ENCODE measurements at regions of chr5 and their contacts with region 1.

Region 1: GRCh38 chr5:102754767-102755431 is at the start of gene PAM:
- DNase-seq: peak; percentile 36
- ATAC-seq: peak; percentile 95
- H3K4me3 ChIP-seq: peak within 1 kb of the TSS; percentile 85 to 88 (median 87)
- H3K27ac ChIP-seq: peak within 1 kb of the TSS; percentile 40
- H3K4me1 ChIP-seq: peaks cover 26% of the 10 kb centered on the region
- H3K27me3 ChIP-seq: peaks cover 1 to 16% of the 10 kb centered on the region in 2 experiments; a peak in 4 of 5 replicates
- CTCF ChIP-seq: no peak
- EP300 ChIP-seq: no peak
- POLR2A ChIP-seq: peak; percentile 30 to 54; a peak in 2 of 4 replicates
- RAD21 ChIP-seq: 0 out of 2 replicates have a peak, but pooled peaks have one; percentile 23
- total RNA-seq, gene PAM: 14.5 and 20.2 TPM in 2 replicates

Region 2: DNA sequence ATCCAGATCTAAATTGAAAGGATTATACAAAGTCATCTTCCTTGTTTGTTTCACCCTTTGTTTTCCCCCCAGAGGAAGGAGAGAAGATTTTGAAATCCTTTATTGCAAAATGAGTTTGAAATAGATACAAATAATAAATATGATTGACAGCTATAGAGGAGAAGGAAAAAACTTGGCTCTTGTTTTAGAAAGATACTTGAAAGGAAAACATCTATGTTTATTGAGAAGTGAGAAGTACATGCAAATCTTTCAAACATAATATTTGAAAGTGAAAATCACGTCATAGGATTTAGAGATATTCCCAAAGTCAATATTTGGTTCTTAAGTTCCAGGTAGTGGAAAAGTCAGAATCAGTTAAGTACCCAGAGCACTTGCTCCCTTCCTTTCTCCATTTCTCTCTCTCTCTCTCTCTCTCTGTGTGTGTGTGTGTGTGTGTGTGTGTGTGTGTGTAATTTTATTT is 27.4 kb after region 1 on chr5:
- CTCF ChIA-PET with region 1: no interaction called
- POLR2A ChIA-PET with region 1: no interaction called
- in situ Hi-C with region 1: no loop called
- intact Hi-C with region 1: no loop called
- DNase-seq: no peak
- ATAC-seq: no peak
- H3K4me3 ChIP-seq: no peak overlapping the region
- H3K27ac ChIP-seq: no peak overlapping the region
- H3K4me1 ChIP-seq: no peaks in the 10 kb centered on the region
- H3K27me3 ChIP-seq: no peaks in the 10 kb centered on the region
- CTCF ChIP-seq: no peak
- EP300 ChIP-seq: no peak
- POLR2A ChIP-seq: no peak
- RAD21 ChIP-seq: no peak

Region 3: GRCh38 chr5:103119765-103120606 is 365.1 kb after region 1 on chr5 and contains the starts of genes GIN1 and PPIP5K2:
- CTCF ChIA-PET with region 1: no interaction called
- POLR2A ChIA-PET with region 1: interaction called, 15 read pairs
- in situ Hi-C with region 1: no loop called
- intact Hi-C with region 1: loop called (anchors 10 kb)
- DNase-seq: peak; percentile 97
- ATAC-seq: peak; percentile 97
- H3K4me3 ChIP-seq: peak within 1 kb of the TSS; percentile 91 to 97 (median 94)
- H3K27ac ChIP-seq: peak within 1 kb of the TSS; percentile 98
- H3K4me1 ChIP-seq: peaks cover 33% of the 10 kb centered on the region
- H3K27me3 ChIP-seq: no peaks in the 10 kb centered on the region; a peak in 1 of 5 replicates
- CTCF ChIP-seq: no peak
- EP300 ChIP-seq: peak in 1 of 2 experiments; percentile 66; a peak in 3 of 4 replicates
- POLR2A ChIP-seq: peak; percentile 86 to 93
- RAD21 ChIP-seq: peak; percentile 45; the same call in 1 of the 2 replicates
- total RNA-seq, gene GIN1: 7.7 and 9.5 TPM in 2 replicates
- total RNA-seq, gene PPIP5K2: 45.6 and 85.2 TPM in 2 replicates

Measured in HepG2 (cell line).